RWPE1 (cell line): ENCODE measurements at regions of chr15 and their contacts with region 1.

Region 1: GRCh38 chr15:90790057-90790456 is 72.9 kb downstream of the BLM start:
- DNase-seq: no peak
- H3K27ac ChIP-seq: no peak overlapping the region
- CTCF ChIP-seq: no peak

Region 2: GRCh38 chr15:91967935-91968606 is 1178.0 kb after region 1 on chr15:
- CTCF ChIA-PET with region 1: interaction called, 14 read pairs
- POLR2A ChIA-PET with region 1: no interaction called
- DNase-seq: no peak
- H3K27ac ChIP-seq: peak overlapping the region; percentile 42
- CTCF ChIP-seq: no peak